Activated CD4-positive, alpha-beta memory T cell treated with anti-CD3 and anti-CD28 coated beads for 36 hours (primary cell): ENCODE measurements at regions of chr12 and their contacts with region 1.

Region 1: GRCh38 chr12:27498149-27498548 is 25.9 kb upstream of the PPFIBP1 start:
- DNase-seq: no peak
- H3K4me3 Mint-ChIP-seq: no peak overlapping the region
- H3K27ac Mint-ChIP-seq: no peak overlapping the region
- H3K4me1 Mint-ChIP-seq: peaks cover 23% of the 10 kb centered on the region
- H3K27me3 Mint-ChIP-seq: peaks cover 31% of the 10 kb centered on the region

Region 2: DNA sequence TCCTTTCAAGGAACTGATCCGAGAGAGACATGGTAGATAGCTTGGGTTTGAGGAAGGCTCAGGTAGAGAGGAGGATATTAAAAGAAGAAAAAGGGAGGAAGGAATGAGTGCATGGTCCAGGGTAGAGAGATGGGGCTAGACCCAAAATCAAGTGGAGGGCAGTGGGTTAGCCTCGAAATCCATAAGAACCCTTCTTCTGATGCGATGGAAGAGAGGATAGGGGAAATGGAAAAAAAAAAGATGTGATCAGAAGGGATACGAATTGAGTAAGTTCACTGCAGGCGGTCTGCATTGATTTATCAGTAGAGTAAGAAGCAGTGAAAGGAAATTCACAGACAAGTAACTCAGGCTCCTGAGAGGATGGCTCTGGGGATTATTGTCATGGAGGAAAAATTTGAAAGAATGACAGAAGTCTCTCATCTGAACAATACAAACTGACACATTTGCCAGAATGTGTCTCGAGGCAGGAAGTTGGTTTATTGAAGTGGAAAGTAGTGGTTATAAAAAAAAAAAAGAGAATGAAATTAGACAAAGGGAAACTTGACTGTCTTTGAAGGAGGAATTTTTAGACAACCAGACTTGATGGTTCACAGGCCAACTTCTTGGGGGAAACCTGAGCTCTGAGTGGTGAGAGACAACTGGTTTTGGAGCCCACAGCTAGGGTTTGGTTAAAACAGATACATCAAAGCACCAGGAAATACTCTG is 36.1 kb after region 1 on chr12:
- CTCF ChIA-PET with region 1: no interaction called
- POLR2A ChIA-PET with region 1: no interaction called
- intact Hi-C with region 1: loop called (anchors 1 kb)
- DNase-seq: peak; percentile 41
- H3K4me3 Mint-ChIP-seq: no peak overlapping the region
- H3K27ac Mint-ChIP-seq: peak overlapping the region; percentile 47
- H3K4me1 Mint-ChIP-seq: peaks cover 32% of the 10 kb centered on the region
- H3K27me3 Mint-ChIP-seq: peaks cover 2% of the 10 kb centered on the region

Region 3: GRCh38 chr12:27984275-27984674 is 486.1 kb after region 1 on chr12:
- CTCF ChIA-PET with region 1: no interaction called
- POLR2A ChIA-PET with region 1: no interaction called
- intact Hi-C with region 1: no loop called
- DNase-seq: no peak
- H3K4me3 Mint-ChIP-seq: no peak overlapping the region
- H3K27ac Mint-ChIP-seq: no peak overlapping the region
- H3K4me1 Mint-ChIP-seq: no peaks in the 10 kb centered on the region
- H3K27me3 Mint-ChIP-seq: peaks cover 21% of the 10 kb centered on the region